Activated naive CD4-positive, alpha-beta T cell treated with anti-CD3 and anti-CD28 coated beads for 36 hours (primary cell): ENCODE measurements at regions of chr2 and their contacts with region 1.

Region 1: DNA sequence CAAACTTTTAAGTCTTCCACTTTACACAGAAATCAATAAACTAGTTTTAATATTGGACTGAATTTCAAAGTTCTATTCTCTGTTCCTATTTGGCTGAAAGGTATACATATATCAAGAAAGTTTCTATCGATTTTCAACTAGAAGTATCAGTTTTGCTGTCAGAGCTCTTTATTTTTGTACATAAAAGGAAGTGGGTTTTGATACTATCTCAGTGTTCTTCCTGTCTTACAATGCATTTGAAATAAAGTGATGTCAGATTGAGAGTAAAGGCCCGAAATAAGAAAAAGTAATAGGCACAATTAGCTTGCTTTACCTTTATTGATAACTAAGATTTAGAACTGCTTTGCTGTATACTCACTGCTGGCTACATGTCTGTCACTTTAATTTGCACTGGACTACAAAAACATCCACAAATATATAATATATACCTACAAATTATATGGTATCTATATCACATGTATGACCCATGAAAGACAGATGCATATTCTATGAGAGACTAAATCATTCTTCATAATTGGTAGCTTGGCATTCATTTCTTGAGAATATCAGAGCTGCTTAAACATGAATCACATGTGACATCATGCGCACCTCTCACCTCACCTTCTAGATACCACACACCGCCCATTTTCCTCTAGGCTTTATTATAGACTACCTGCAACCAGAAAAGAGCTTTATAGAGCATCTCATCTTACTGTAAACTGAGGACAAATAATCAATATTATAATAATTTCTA is 83.6 kb downstream of the ASXL2 start:
- DNase-seq: no peak
- H3K4me3 Mint-ChIP-seq: peak overlapping the region; percentile 49
- H3K27ac Mint-ChIP-seq: peak overlapping the region; percentile 86
- H3K4me1 Mint-ChIP-seq: peaks cover 85% of the 10 kb centered on the region
- H3K27me3 Mint-ChIP-seq: no peaks in the 10 kb centered on the region

Region 2: DNA sequence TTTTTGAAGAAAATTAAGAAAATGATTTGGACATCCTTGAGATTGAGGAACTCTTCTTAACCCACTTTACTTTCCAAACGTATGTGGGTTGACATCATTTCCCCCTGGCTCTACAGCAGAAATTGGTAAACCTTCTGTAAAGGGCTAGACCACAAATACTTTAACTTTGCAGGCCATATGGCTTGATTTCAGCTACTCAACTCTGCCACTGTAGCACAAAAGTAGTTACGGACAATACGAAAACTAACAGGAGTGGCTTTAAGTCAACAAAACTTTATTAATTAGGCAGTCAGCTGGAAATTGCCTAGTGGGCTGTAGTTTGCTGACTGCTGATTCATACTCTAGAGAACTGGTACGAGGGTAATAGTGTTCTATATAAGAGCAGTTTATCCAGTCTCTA is 38.2 kb before region 1 on chr2:
- CTCF ChIA-PET with region 1: no interaction called
- intact Hi-C with region 1: loop called (anchors 1 kb)
- DNase-seq: no peak
- H3K4me3 Mint-ChIP-seq: no peak overlapping the region
- H3K27ac Mint-ChIP-seq: no peak overlapping the region
- H3K4me1 Mint-ChIP-seq: peaks cover 12% of the 10 kb centered on the region
- H3K27me3 Mint-ChIP-seq: no peaks in the 10 kb centered on the region

Region 3: DNA sequence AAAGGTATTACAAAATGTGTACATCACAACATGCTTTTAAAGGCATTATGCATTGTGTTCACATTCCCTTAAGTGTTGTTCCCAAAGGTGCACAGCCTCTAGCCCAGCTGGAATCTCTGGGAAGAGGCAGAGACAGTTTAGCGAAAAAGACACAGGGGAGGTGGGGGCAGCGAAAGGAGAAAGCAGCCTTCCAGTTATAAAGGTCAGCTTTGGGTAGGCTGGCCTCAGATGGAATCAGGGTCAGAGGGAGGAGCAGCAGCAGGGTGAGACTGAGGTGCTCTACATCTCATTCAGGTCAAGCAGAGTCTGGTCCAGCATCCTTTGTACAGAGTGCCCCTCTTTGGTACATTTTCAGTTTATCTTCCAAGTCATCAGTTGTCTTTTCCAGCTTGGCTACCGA is 14.9 kb after region 1 on chr2:
- CTCF ChIA-PET with region 1: interaction called, 3 read pairs
- intact Hi-C with region 1: loop called (anchors 1 kb)
- DNase-seq: no peak
- H3K4me3 Mint-ChIP-seq: no peak overlapping the region
- H3K27ac Mint-ChIP-seq: no peak overlapping the region
- H3K4me1 Mint-ChIP-seq: peaks cover 40% of the 10 kb centered on the region
- H3K27me3 Mint-ChIP-seq: no peaks in the 10 kb centered on the region

Region 4: DNA sequence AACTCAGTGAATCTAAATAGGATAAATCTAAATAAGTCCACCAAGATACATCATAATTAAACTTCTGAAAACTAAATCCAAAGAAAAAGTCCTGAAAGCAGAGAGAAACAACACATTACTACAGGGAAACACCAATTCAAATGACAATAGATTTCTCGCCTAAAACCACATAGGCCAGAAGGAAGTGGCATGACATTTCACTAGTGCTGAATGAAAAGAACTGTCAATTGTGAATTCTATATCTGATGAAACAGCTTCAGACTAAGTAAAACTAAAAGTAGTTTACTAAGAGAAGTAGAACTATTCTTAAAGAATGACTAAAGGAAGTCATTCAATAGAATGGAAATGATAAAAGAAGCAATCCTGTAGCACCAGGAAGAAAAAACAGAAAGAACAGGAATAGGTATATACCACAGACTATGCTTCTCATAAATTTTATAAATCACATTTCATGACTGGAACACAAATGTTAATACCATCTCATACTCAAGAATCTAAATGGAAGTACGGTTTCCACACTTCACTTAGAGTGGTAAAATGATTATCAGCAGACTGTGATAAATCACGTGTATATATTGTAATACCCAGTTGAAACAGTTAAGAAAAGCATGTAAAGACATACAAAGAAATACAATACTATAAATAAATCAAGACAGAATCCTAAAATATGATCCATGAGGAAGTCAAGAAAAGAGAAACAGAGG is 37.2 kb after region 1 on chr2:
- CTCF ChIA-PET with region 1: no interaction called
- intact Hi-C with region 1: loop called (anchors 1 kb)
- DNase-seq: peak; percentile 36
- H3K4me3 Mint-ChIP-seq: peak overlapping the region; percentile 24
- H3K27ac Mint-ChIP-seq: peak overlapping the region; percentile 90
- H3K4me1 Mint-ChIP-seq: peaks cover 61% of the 10 kb centered on the region
- H3K27me3 Mint-ChIP-seq: no peaks in the 10 kb centered on the region